Transverse colon (tissue), 4 donors: ENCODE measurements at regions of chr14 and their contacts with region 1.

Region 1: GRCh38 chr14:72893636-72894321 is at the start of gene DPF3:
- DNase-seq: peak; percentile 98
- H3K4me3 ChIP-seq: peak within 1 kb of the TSS; percentile 64 to 94 (median 76)
- H3K27ac ChIP-seq: peak within 1 kb of the TSS; percentile 62 to 82 (median 79)
- H3K4me1 ChIP-seq: peaks cover 10 to 29% (median 22%) of the 10 kb centered on the region in 4 donors
- H3K27me3 ChIP-seq: peaks cover 42% of the 10 kb centered on the region
- CTCF ChIP-seq: no peak
- EP300 ChIP-seq: no peak
- POLR2A ChIP-seq: no peak
- total RNA-seq, gene DPF3: 7.1 to 23.5 (median 10.9) TPM

Region 2: DNA sequence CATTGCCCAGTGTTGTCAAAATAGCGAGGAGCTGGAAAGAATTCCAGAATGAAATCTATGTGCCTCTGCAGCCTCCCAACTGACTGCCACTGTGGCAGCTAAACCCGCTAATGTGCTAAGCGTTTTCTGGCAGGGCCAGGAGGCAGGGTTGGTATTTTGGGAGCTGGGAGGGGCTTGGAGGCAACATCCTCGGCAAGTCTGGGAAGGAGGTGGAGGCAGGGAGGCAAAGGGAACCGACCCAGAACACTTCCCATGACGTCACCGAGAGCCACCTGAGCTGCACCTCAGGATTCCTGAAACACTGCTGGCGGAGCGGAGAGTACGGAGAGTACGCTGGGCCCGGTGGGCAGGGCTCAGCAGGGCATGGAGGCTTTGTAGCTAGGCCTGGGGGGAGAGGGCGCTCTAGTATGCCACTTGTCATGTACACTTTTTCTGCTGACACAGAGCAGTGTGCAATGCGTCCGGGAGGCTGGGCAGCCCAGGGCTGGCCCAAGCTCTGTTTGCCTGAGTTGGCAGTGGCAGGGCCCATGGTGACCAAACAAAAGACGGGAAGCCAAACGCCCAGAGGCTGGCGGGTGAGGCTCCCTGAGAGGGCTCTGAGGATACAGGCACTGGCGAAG is 81.4 kb before region 1 on chr14:
- in situ Hi-C with region 1: no loop called
- intact Hi-C with region 1: loop called (anchors 5 kb)
- DNase-seq: peak; percentile 10
- H3K4me3 ChIP-seq: no peak overlapping the region
- H3K27ac ChIP-seq: peak overlapping the region; percentile 15 to 61 (median 48)
- H3K4me1 ChIP-seq: no peaks in the 10 kb centered on the region
- H3K27me3 ChIP-seq: no peaks in the 10 kb centered on the region
- CTCF ChIP-seq: no peak
- EP300 ChIP-seq: no peak
- POLR2A ChIP-seq: no peak